Ascending aorta (tissue), 2 donors: ENCODE measurements at regions of chr13 and their contacts with region 1.

Region 1: DNA sequence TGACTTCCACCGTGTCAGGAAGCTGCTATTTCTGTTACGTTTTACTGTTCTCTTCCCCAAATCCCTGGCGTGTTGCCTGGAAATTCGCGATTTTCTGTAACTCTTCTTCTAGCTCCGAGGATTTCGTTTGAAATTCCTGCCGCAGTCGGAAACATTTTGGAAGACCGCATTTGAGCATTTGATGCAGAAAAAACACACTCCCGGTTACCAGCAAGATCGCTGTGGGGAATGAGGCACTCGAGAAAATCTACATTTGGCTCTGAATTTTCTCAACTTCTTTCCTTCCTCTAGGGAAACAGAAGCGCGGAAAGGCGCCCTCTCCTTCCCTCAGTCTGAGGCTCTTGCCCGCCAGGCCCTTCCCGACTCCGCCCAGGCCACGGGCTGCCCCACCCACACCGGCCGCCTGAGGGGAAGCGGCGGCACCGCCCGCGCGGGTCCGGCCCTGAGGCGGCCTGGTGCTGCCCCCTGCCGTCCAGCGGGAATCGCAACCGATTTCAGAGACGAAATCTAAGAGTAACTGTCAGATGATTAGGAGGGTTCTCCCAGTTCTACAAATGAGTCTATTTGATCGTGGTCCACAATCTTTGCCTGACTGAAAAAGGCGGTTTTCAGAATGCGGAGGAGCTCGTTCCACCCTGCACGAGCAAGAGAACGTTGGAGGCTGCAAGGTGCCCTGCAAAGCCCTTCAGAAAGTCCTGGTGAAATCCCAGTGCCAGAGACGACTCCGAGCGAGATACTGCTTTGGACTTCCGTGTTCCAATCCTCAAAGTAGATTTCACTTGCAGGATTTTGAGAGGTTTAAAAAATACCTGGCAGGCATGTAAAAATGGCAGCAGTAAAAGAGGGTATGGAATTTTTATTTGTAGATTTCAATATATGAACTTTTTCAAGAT is 18.4 kb upstream of the TUBGCP3 start:
- DNase-seq: peak; percentile 72 to 95
- H3K4me3 ChIP-seq: peak overlapping the region; percentile 49 to 72
- H3K27ac ChIP-seq: peak overlapping the region; percentile 35 to 76
- H3K4me1 ChIP-seq: peaks cover 0 to 3% of the 10 kb centered on the region in 2 donors
- H3K27me3 ChIP-seq: no peaks in the 10 kb centered on the region
- CTCF ChIP-seq: peak; percentile 94 to 96 (median 95)

Region 2: DNA sequence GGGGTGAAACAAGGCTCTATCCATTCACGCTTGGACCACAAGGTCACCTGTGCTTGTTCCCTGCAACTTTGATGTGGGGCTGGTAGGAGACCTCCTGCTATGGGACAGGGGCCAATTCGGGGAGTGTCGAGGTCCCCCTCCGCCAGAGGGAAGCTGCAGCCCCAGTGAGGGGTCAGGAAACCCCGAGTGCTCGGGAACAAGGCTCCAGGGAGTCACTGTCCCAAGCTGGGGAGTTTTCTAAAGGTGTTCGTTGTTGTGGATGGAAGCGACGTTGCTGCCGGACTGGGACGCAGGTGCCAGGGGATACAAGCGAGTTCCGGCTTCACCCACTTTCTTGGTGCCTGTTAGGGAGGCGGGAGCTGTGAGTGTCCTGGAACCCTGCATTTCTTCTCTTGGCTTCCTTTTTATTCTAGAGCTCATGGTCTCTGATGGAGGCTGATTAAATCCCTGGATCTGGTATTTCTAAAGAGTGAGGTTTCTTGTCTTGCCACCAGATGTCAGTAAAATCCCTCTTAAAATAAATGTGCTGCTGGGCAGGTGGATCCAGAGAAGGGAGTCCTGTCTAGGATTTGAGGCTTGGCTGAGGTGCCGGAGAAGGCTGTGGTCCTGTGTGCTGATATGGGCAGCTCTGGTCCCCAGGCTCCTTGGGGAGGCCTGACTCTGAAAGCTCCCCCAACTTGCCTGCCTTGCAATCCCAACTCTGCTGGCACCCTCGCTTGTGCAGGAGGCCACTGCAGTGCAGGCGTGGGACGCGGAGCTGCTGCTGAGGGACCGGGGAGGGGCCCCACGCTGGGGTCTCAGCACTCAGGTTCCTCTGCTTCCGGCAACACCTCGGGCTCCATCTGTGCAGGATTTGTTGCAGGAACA is 1132.0 kb before region 1 on chr13:
- intact Hi-C with region 1: loop called (anchors 5 kb)
- DNase-seq: no peak
- H3K4me3 ChIP-seq: no peak overlapping the region
- H3K27ac ChIP-seq: no peak overlapping the region
- H3K4me1 ChIP-seq: no peaks in the 10 kb centered on the region
- H3K27me3 ChIP-seq: no peaks in the 10 kb centered on the region
- CTCF ChIP-seq: peak in 1 of 3 experiments; percentile 49

Region 3: DNA sequence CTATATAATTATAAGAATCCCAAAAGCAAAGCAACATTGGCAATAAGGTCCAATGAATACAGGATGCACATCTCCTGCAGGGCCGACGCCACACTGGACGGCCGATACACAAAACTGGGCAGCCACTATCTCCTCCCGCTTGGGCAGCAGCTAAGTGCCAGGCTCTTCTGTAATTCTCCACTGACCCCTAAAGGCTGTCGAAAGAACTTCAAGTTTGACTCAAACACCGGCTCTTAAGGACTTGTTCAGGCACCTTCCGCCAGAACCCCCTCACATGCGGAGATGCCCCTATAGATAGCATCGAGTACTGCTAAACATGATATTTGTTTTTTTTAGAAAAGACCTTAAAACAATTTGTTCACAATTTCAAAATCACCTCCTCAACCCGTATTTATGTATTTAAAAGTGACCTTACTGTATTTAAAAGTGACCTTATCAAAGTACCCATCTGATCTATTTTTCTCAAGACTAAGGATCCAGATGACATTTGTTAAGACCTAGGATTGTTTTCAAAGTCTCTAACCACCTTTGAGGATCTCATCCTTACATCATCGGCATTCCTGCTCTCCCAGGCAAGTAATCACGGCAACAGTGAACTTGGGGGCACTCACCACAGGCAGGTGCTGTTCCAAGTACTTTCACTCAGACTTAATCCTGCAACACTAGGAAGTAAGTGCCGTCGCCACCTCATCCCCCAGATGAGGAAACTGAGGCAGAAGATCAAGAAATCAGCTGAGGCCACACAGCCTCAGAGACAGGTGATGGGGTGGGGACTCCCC is 96.2 kb before region 1 on chr13:
- intact Hi-C with region 1: loop called (anchors 5 kb)
- DNase-seq: no peak
- H3K4me3 ChIP-seq: no peak overlapping the region
- H3K27ac ChIP-seq: no peak overlapping the region
- H3K4me1 ChIP-seq: no peaks in the 10 kb centered on the region
- H3K27me3 ChIP-seq: no peaks in the 10 kb centered on the region
- CTCF ChIP-seq: peak in 2 of 3 experiments; percentile 40 to 47

Region 4: GRCh38 chr13:112587212-112587763 is 19.1 kb before region 1 on chr13:
- intact Hi-C with region 1: loop called (anchors 1 kb)
- DNase-seq: peak; percentile 62 to 93
- H3K4me3 ChIP-seq: peak overlapping the region; percentile 82
- H3K27ac ChIP-seq: peak overlapping the region; percentile 89 to 98
- H3K4me1 ChIP-seq: peaks cover 5 to 12% of the 10 kb centered on the region in 2 donors
- H3K27me3 ChIP-seq: no peaks in the 10 kb centered on the region
- CTCF ChIP-seq: peak in 1 of 3 experiments; percentile 22